ENCODE measurements at regions of chr14 and their contacts with region 1.

Region 1: DNA sequence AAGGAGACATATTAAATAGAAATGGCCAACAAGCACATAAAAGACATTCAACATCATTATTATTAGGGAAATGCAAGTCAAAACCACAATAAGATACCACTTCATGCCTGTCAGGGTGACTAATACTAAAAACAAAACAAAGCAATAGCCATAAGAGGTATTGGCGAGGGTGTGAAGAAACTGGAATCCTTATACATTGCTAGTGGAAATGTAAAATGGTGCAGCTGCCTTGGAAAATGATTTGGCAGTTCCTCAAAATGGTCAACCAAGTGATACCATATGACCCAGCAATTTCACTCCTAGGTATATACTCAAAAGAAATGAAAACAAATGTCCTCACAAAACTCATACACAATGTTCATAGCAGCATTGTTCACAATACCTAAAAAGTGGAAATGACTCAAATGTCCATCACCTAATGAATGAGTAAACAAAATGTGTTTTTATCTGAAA is 27.0 kb downstream of the GPR135 start:
- DNase-seq: no peak
- H3K4me3 Mint-ChIP-seq: no peak overlapping the region
- H3K27ac Mint-ChIP-seq: no peak overlapping the region
- H3K4me1 Mint-ChIP-seq: no peaks in the 10 kb centered on the region
- H3K27me3 Mint-ChIP-seq: no peaks in the 10 kb centered on the region

Region 2: DNA sequence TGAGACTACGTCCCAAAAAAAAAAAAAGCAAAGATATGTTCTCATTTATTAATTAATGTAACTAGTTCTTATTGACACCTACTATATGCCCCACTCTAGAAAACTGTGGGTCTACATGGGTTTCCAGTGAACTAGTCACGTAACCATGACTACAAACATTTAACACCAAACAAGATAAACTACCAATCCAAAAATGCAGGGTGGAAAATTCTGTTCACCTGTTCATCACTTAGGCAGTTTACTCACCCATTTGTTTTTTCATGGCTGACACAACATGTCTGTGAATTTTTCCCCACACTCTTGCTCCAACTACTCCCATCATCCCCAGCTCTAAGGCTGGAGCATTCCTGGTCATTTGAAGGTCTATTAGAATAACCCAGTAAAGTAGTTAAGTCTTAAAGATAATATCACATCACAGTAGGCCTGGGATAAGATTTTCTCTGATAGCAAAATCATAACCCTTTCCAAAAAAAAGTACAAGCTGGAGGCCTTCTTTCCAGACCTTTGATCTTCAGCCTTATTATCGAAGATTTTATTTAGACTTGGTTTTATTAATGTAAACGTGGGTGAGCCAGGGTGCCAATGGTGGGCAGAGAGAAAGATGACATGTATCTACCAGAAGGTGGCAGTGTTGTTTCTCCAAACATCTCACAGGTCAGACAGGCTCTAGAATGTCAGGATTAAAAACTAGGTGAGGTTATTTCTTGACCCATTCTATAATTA is 311.4 kb before region 1 on chr14:
- CTCF ChIA-PET with region 1: interaction called, 40 read pairs
- POLR2A ChIA-PET with region 1: no interaction called
- DNase-seq: no peak
- H3K4me3 Mint-ChIP-seq: no peak overlapping the region
- H3K27ac Mint-ChIP-seq: no peak overlapping the region
- H3K4me1 Mint-ChIP-seq: no peaks in the 10 kb centered on the region
- H3K27me3 Mint-ChIP-seq: peaks cover 24% of the 10 kb centered on the region

Region 3: GRCh38 chr14:59320763-59321640 is 117.2 kb before region 1 on chr14:
- CTCF ChIA-PET with region 1: no interaction called
- POLR2A ChIA-PET with region 1: no interaction called
- DNase-seq: no peak
- H3K4me3 Mint-ChIP-seq: no peak overlapping the region
- H3K27ac Mint-ChIP-seq: no peak overlapping the region
- H3K4me1 Mint-ChIP-seq: peaks cover 12% of the 10 kb centered on the region
- H3K27me3 Mint-ChIP-seq: no peaks in the 10 kb centered on the region

Region 4: GRCh38 chr14:59583755-59584154 is 145.5 kb after region 1 on chr14:
- CTCF ChIA-PET with region 1: no interaction called
- POLR2A ChIA-PET with region 1: no interaction called
- DNase-seq: no peak
- H3K4me3 Mint-ChIP-seq: no peak overlapping the region
- H3K27ac Mint-ChIP-seq: no peak overlapping the region
- H3K4me1 Mint-ChIP-seq: peaks cover 4% of the 10 kb centered on the region
- H3K27me3 Mint-ChIP-seq: no peaks in the 10 kb centered on the region